ENCODE measurements at regions of chr20 and their contacts with region 1.

Region 1: DNA sequence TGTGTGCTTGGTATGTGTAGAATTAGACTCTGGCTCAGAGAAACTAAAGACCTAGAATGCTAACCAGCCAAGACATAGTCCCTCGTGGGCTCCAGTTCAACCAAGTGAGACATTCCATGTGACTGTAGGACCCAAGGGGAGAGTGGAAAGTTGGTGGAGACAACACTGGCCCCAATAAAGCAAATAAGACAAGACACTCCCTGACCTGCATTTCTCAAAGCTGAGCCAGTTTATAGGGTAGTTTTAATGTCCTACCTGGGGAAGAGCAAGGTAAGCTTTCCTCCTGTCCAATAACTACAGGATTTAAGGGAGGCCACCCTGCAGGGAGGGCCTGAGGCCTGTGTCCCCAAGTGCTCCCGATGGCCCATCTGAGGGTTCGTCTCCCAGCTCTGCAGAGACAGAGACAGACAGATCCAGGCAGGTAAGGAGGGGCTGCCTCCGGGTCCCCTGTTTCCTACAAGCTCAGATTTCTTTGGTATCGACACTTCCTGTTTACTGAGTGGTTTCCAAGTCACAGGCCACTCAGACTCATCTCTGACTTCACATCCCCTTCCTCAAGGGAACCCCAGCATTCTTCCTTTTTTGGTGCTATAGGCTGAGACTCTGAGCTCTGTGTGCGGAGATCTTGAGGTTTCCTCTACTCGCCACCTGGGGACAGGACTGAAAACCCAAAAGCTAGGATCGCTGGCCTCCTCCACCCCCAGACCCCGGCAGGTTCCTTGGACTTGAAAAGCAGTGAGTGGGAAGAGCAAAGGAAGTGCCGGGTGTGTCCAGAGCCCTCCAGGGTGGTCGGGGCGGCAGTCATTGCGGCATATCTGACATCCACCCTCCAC is 92.4 kb downstream of the PRND start:
- DNase-seq: peak; percentile 73
- H3K4me3 Mint-ChIP-seq: peak overlapping the region; percentile 83
- H3K27ac Mint-ChIP-seq: peak overlapping the region; percentile 97
- H3K4me1 Mint-ChIP-seq: peaks cover 54% of the 10 kb centered on the region
- H3K27me3 Mint-ChIP-seq: no peaks in the 10 kb centered on the region

Region 2: DNA sequence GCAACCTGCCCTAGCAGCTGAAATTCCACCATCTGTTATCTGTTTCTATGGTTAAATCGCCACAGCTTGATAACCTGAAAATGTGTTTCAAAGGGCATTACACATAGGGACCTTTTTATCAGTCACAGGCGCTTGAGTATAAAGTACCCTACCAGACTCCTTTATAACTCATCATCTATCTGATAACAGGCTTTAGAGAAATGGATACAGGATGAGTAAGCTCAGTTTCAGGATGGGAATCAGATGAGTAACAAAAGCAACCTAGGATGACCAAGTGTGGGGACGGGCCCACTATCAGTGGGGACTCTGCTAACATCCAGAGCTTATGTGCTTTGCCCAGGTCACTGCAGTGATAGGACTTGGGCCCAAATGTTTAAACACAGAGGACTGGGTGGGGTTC is 16.8 kb before region 1 on chr20:
- intact Hi-C with region 1: loop called (anchors 2 kb)
- DNase-seq: no peak
- H3K4me3 Mint-ChIP-seq: no peak overlapping the region
- H3K27ac Mint-ChIP-seq: no peak overlapping the region
- H3K4me1 Mint-ChIP-seq: peaks cover 13% of the 10 kb centered on the region
- H3K27me3 Mint-ChIP-seq: no peaks in the 10 kb centered on the region

Region 3: GRCh38 chr20:5119435-5120188 is 305.5 kb after region 1 on chr20 and contains the start of gene PCNA:
- intact Hi-C with region 1: loop called (anchors 5 kb)
- DNase-seq: peak; percentile 98
- H3K4me3 Mint-ChIP-seq: peak within 1 kb of the TSS; percentile 89
- H3K27ac Mint-ChIP-seq: peak within 1 kb of the TSS; percentile 94
- H3K4me1 Mint-ChIP-seq: peaks cover 50% of the 10 kb centered on the region
- H3K27me3 Mint-ChIP-seq: no peaks in the 10 kb centered on the region
- total RNA-seq, gene PCNA: 429 and 431 TPM in 2 replicates

Measured in activated T-helper 2 cell treated with anti-CD3 and anti-CD28 coated beads, Interferon-gamma antibody, Interleukin-2, Interleukin-4, amounts not matched to agents 10 μg/mL and 5 μg/mL and 100 μg/mL, durations not matched to agents 14 hours and 24 hours and 36 hours (primary cell).